Left ventricle myocardium inferior (tissue), 1 donor: ENCODE measurements at regions of chr7 and their contacts with region 1.

Region 1: GRCh38 chr7:138161600-138162081 is 85.4 kb downstream of the AKR1D1 start:
- DNase-seq: peak; percentile 52
- H3K4me3 ChIP-seq: no peak overlapping the region
- H3K27ac ChIP-seq: no peak overlapping the region
- H3K4me1 ChIP-seq: no peaks in the 10 kb centered on the region
- H3K27me3 ChIP-seq: no peaks in the 10 kb centered on the region
- CTCF ChIP-seq: peak; percentile 77

Region 2: DNA sequence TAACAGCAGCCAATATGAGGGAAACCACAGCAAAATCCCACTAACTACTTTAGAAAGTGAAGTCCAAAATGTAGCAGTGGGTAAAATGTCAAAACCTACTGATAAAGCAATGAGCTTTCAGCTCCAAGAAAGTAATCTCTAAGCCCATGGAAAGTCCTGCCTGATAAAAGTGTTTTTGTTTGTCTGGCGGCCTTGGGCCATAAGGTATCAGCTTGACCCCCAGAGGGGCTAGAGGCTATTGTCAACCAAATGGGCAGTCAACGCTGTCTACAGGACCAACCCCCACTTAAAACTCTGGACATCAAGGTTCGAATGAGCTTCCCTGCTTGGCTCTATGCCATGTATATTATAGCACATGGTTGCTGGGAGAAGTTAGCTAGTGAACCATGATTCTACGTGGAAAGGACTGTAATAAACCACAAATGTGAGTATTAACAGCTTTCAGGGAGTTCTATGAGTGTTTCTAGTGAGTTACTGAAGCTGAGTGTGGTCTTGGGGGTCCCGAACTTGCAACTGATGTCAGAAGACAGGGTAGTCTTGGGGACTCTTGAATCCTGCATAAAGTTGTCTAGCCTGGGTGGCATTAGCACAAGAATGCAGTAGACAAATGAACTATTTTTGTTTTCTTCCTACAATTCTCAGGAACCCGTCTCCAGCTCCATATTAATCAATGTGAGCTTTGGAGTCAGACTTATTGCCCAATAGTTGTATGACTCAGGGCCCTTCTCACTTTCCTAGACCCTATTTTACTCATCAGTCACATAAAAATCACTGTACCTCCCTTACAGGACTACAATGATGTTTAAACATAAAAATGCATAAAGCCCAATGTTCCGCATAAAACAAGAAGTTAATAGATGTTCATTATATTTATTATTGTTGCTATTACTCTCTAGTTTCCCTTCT is 479.7 kb before region 1 on chr7:
- intact Hi-C with region 1: no loop called
- DNase-seq: no peak
- H3K4me3 ChIP-seq: no peak overlapping the region
- H3K27ac ChIP-seq: no peak overlapping the region
- H3K4me1 ChIP-seq: no peaks in the 10 kb centered on the region
- H3K27me3 ChIP-seq: no peaks in the 10 kb centered on the region
- CTCF ChIP-seq: no peak

Region 3: GRCh38 chr7:138738551-138739335 is 577.1 kb after region 1 on chr7:
- intact Hi-C with region 1: loop called (anchors 5 kb)
- DNase-seq: peak; percentile 78
- H3K4me3 ChIP-seq: no peak overlapping the region
- H3K27ac ChIP-seq: no peak overlapping the region
- H3K4me1 ChIP-seq: no peaks in the 10 kb centered on the region
- H3K27me3 ChIP-seq: no peaks in the 10 kb centered on the region
- CTCF ChIP-seq: peak; percentile 92